K562 (cell line): ENCODE measurements at regions of chr4 and their contacts with region 1.

Region 1: DNA sequence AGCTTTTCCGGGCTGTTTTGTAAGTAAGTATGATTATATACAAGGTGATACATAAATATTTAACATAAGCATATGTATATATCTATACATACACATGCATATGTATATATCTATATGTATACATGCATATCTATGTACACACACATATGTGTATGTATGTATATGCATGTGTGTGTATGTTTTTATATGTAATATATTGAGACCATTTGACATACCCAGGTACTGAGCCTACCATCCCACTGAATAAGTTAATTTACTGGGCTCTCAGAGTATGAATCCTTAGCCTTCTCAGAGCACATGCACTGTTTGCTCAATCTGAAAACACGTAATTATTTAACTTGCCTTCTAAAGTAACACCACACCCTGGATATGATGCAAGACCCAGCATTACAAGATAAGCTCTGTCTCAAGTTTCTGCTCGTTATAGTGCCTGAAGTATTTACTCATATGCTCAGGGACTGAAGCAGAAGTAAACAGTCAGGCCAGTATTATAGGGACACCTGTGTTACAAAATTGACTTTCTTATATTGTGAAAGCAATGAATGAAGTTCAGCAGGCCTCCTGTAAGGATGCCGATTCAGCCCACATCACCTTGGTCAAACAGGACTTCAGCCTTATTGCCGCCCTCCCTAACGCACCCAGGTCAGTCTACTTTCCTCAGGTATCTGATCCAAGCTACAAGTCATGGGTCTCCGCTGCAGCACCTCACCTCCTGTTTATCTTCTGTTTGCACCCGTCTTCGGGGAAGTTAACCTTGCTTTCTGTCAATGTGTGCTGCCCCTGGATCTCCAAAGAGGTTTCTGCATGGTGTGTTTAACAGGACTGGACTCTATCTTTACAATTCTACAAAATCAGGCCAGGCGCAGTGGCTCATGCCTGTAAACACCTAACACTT is 43.0 kb upstream of the KLF3 start:
- DNase-seq: peak; percentile 43 to 77 (median 58)
- ATAC-seq: peak; percentile 88
- H3K4me3 ChIP-seq: 0 out of 2 replicates have a peak overlapping the region, but pooled peaks have one; percentile 8
- H3K27ac ChIP-seq: peak overlapping the region; percentile 89
- H3K4me1 ChIP-seq: peaks cover 19 to 30% of the 10 kb centered on the region in 2 experiments
- H3K27me3 ChIP-seq: no peaks in the 10 kb centered on the region
- CTCF ChIP-seq: no peak
- EP300 ChIP-seq: peak; percentile 74
- POLR2A ChIP-seq: no peak
- RAD21 ChIP-seq: 0 out of 4 replicates have a peak, but pooled peaks of 1 of the 2 experiments have one; percentile 15

Region 2: DNA sequence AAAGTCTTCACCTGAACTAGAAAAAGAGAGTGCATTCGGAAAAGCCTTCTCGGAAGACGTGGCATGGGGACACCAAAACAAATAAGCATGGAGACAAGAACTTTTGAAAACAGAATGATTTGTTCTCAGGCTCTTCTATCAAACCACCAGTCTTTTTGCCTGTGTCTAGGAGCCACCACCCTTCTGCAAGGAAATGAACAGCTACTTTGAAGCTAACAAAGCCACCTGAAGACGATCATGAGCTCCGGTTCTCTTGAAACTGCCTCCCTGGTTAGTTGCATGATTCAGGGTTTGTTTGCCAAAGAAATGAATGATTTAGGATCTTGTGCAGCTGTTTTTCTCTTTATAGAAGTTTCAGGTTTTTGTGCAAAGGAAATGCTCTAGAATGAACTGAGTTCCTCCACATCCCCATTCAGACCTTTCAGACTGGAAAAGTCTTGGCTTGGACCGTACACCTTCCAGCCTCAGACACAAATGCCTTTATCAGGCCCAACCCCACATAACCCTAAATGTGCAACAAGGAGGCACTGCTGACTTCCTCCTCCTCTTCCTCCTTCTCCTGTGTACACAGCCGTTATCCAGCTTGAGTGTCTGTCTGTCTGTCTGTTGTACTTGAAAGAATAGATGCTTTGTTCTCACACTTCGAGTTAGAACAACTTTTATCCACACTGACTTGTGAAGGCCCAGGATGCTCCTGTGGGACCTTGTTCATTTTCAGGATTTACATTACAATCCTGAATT is 291.9 kb before region 1 on chr4:
- CTCF ChIA-PET with region 1: no interaction called
- POLR2A ChIA-PET with region 1: no interaction called
- in situ Hi-C with region 1: no loop called
- intact Hi-C with region 1: loop called (anchors 2 kb)
- DNase-seq: peak in 1 of 4 experiments; percentile 40
- ATAC-seq: peak; percentile 16; the same call in 2 of the 3 replicates
- H3K4me3 ChIP-seq: no peak overlapping the region
- H3K27ac ChIP-seq: no peak overlapping the region; the same call in 2 of the 3 replicates
- H3K4me1 ChIP-seq: peaks cover 18 to 32% of the 10 kb centered on the region in 2 experiments
- H3K27me3 ChIP-seq: no peaks in the 10 kb centered on the region
- CTCF ChIP-seq: no peak
- EP300 ChIP-seq: no peak
- POLR2A ChIP-seq: no peak
- RAD21 ChIP-seq: no peak

Region 3: DNA sequence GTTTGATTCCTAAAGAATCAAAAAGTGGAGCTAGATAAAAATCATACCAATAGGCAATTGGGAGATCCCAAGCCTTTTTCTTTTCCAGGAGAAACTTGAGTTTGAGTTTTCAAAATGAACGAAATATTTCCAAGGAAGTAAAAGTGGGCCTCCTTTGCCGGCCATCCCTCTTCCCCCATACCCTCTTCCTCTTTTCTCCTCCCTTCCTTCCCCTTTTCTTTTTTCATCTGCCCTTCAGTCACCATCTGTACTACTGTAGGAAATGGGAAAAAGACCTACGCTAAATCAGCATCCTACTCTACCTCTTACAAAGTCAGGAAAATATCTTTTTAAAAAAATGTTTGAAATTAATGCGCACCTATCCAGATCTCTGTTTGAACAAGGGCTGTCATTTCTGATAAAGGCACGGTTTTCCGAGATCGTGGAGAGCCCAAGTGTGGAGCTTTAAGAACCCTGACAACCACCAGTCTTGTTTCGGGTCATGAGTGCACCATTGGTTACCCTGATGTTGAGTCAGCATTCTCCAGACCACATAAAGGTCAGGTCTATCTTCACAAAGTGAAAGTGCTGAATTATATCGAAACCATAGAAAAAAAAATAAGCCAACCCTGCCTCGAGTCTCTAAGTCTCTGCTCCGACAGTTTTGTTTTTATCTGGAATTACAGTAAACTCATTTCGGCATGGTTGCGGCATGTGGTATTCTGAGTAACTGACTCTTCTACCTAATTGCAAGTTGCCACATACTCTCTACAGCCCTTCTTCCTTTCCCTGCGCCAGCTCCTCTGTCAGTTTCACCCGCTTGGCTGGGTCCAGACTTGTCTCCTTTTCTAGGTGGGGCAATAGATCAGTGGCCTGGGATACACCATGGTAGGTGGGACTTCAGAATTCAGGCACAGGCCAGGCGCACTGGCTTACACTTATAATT is 97.3 kb before region 1 on chr4:
- CTCF ChIA-PET with region 1: no interaction called
- POLR2A ChIA-PET with region 1: no interaction called
- in situ Hi-C with region 1: no loop called
- intact Hi-C with region 1: loop called (anchors 5 kb)
- DNase-seq: peak; percentile 55 to 79 (median 68)
- ATAC-seq: peak; percentile 87
- H3K4me3 ChIP-seq: peak overlapping the region; percentile 2; the same call in 1 of the 2 replicates
- H3K27ac ChIP-seq: peak overlapping the region; percentile 91
- H3K4me1 ChIP-seq: peaks cover 13 to 35% of the 10 kb centered on the region in 2 experiments
- H3K27me3 ChIP-seq: no peaks in the 10 kb centered on the region
- CTCF ChIP-seq: no peak
- EP300 ChIP-seq: peak; percentile 13; the same call in 1 of the 2 replicates
- POLR2A ChIP-seq: no peak
- RAD21 ChIP-seq: no peak

Region 4: GRCh38 chr4:38663801-38664705 is 43.0 kb after region 1 on chr4 and contains the start of gene KLF3:
- CTCF ChIA-PET with region 1: no interaction called
- POLR2A ChIA-PET with region 1: interaction called, 10 read pairs
- in situ Hi-C with region 1: no loop called
- intact Hi-C with region 1: loop called (anchors 2 kb)
- DNase-seq: peak; percentile 88 to 92 (median 90)
- ATAC-seq: peak; percentile 68
- H3K4me3 ChIP-seq: peak within 1 kb of the TSS; percentile 92
- H3K27ac ChIP-seq: peak within 1 kb of the TSS; percentile 98
- H3K4me1 ChIP-seq: peaks cover 17 to 33% of the 10 kb centered on the region in 2 experiments
- H3K27me3 ChIP-seq: no peaks in the 10 kb centered on the region
- CTCF ChIP-seq: no peak
- EP300 ChIP-seq: no peak
- POLR2A ChIP-seq: no peak; the same call in none of the 2 replicates
- RAD21 ChIP-seq: no peak
- polyA plus RNA-seq, gene KLF3: 9.9 to 16.8 TPM

Region 5: GRCh38 chr4:38730830-38731646 is 110.0 kb after region 1 on chr4:
- CTCF ChIA-PET with region 1: no interaction called
- POLR2A ChIA-PET with region 1: no interaction called
- in situ Hi-C with region 1: no loop called
- intact Hi-C with region 1: no loop called
- DNase-seq: peak; percentile 75 to 87 (median 84)
- ATAC-seq: peak; percentile 98
- H3K4me3 ChIP-seq: no peak overlapping the region
- H3K27ac ChIP-seq: no peak overlapping the region
- H3K4me1 ChIP-seq: peaks cover 0 to 2% of the 10 kb centered on the region in 2 experiments; a peak in 3 of 5 replicates
- H3K27me3 ChIP-seq: no peaks in the 10 kb centered on the region
- CTCF ChIP-seq: peak; percentile 86 to 96 (median 88)
- EP300 ChIP-seq: no peak
- POLR2A ChIP-seq: no peak
- RAD21 ChIP-seq: peak; percentile 95 to 98